ENCODE measurements at regions of chr4 and their contacts with region 1.

Region 1: DNA sequence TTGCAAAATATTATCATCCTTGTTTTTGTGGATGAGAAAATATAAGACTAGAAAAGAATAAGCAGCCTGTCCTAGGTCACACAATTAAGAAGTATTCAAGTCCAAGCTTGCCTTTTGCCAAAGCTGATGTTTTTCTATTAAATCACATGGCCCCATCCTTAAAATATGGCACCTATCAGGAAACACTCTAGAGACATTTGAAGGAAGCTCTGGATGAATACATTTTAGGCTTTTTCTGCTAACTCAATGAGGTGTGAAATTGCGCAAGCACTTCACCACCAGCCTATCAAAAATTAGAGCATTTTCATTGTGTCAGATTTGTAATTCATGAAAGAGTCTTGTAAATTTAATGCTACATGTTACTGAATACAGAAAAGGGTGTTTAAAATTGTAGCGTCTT is 251.1 kb upstream of the MAD2L1 start:
- DNase-seq: no peak
- ATAC-seq: no peak
- H3K4me3 ChIP-seq: no peak overlapping the region
- H3K27ac ChIP-seq: no peak overlapping the region
- H3K4me1 ChIP-seq: no peaks in the 10 kb centered on the region
- H3K27me3 ChIP-seq: no peaks in the 10 kb centered on the region
- CTCF ChIP-seq: no peak
- EP300 ChIP-seq: no peak
- POLR2A ChIP-seq: no peak
- RAD21 ChIP-seq: no peak

Region 2: GRCh38 chr4:120163895-120164294 is 153.8 kb before region 1 on chr4:
- CTCF ChIA-PET with region 1: no interaction called
- POLR2A ChIA-PET with region 1: no interaction called
- in situ Hi-C with region 1: no loop called
- intact Hi-C with region 1: no loop called
- DNase-seq: no peak
- ATAC-seq: no peak
- H3K4me3 ChIP-seq: no peak overlapping the region
- H3K27ac ChIP-seq: no peak overlapping the region
- H3K4me1 ChIP-seq: no peaks in the 10 kb centered on the region
- H3K27me3 ChIP-seq: no peaks in the 10 kb centered on the region; a peak in 1 of 5 replicates
- CTCF ChIP-seq: no peak
- EP300 ChIP-seq: no peak
- POLR2A ChIP-seq: no peak
- RAD21 ChIP-seq: no peak

Region 3: GRCh38 chr4:121614101-121614500 is 1296.4 kb after region 1 on chr4:
- CTCF ChIA-PET with region 1: no interaction called
- POLR2A ChIA-PET with region 1: no interaction called
- in situ Hi-C with region 1: no loop called
- intact Hi-C with region 1: loop called (anchors 5 kb)
- DNase-seq: no peak
- ATAC-seq: no peak
- H3K4me3 ChIP-seq: no peak overlapping the region
- H3K27ac ChIP-seq: no peak overlapping the region
- H3K4me1 ChIP-seq: peaks cover 13% of the 10 kb centered on the region
- H3K27me3 ChIP-seq: no peaks in the 10 kb centered on the region; a peak in 2 of 5 replicates
- CTCF ChIP-seq: no peak
- EP300 ChIP-seq: no peak
- POLR2A ChIP-seq: no peak
- RAD21 ChIP-seq: no peak